ENCODE measurements at regions of chr18 and their contacts with region 1.

Region 1: DNA sequence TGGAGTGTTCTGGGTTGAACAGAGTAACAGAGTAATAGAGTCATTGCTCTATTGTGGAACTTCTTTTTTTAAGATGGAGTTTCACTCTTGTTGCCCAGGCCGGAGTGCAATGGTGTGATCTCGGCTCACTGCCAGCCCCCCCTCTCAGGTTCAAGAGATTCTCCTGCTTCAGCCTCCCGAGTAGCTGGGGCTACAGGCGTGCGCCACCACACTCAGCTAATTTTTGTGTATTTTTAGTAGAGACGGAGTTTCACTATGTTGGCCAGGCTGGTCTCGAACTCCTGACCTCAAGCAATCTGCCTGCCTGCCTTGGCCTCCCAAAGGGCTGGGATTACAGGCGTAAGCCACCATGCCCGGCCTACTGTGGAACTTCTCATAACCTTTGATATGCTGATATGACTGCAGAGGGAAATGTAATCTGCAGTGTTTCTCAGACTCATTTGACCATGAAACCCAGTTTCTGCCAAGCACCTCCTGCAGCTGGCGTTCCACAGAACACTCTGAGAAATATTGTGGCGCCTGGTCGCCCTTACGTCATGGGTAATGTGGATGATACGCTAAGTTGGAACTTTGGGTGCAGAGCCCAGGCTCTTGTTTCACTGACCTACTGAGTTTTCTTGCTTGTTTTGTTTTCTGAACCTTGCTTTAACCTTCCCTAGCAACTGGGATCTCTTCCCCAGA is 213.8 kb downstream of the BCL2 start:
- DNase-seq: no peak
- H3K4me3 Mint-ChIP-seq: no peak overlapping the region
- H3K27ac Mint-ChIP-seq: no peak overlapping the region
- H3K4me1 Mint-ChIP-seq: peaks cover 61% of the 10 kb centered on the region
- H3K27me3 Mint-ChIP-seq: peaks cover 5% of the 10 kb centered on the region

Region 2: DNA sequence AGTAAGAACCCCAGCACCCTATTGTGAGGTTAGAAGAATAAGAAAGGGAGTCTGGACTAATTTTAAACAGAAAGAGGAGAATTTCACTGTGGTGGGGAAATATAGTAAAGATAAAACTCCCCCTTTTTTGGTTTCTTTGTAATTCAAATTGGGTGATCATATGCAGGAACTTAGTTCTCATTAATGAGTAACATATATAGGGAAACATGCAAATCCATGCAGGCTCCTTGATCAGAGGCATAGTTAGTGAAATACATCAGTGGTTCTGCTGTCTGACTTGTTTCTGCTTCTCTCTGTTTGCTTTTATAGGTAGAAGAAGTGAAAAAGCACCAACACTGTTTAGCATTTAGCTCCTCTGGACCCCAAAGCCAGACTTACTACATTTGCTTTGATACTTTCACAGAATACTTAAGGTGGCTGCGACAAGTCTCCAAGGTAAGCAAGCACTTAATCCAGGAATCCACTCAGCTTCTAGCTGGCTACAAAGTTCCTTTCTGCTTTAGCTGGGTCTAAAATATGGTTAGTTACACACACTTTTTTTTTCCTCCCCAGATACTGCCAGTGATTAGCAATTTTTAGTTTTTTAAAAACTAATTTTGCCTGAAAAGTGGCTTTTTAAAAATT is 267.2 kb before region 1 on chr18:
- intact Hi-C with region 1: loop called (anchors 5 kb)
- DNase-seq: no peak
- H3K4me3 Mint-ChIP-seq: no peak overlapping the region
- H3K27ac Mint-ChIP-seq: no peak overlapping the region
- H3K4me1 Mint-ChIP-seq: peaks cover 51% of the 10 kb centered on the region
- H3K27me3 Mint-ChIP-seq: no peaks in the 10 kb centered on the region

Region 3: GRCh38 chr18:63074981-63075404 is 30.8 kb before region 1 on chr18:
- intact Hi-C with region 1: loop called (anchors 5 kb)
- DNase-seq: peak; percentile 56
- H3K4me3 Mint-ChIP-seq: peak overlapping the region; percentile 71
- H3K27ac Mint-ChIP-seq: no peak overlapping the region
- H3K4me1 Mint-ChIP-seq: peaks cover 13% of the 10 kb centered on the region
- H3K27me3 Mint-ChIP-seq: peaks cover 10% of the 10 kb centered on the region

Region 4: GRCh38 chr18:63119647-63120046 is 13.9 kb after region 1 on chr18:
- intact Hi-C with region 1: loop called (anchors 1 kb)
- DNase-seq: no peak
- H3K4me3 Mint-ChIP-seq: no peak overlapping the region
- H3K27ac Mint-ChIP-seq: no peak overlapping the region
- H3K4me1 Mint-ChIP-seq: peaks cover 2% of the 10 kb centered on the region
- H3K27me3 Mint-ChIP-seq: peaks cover 24% of the 10 kb centered on the region

Region 5: DNA sequence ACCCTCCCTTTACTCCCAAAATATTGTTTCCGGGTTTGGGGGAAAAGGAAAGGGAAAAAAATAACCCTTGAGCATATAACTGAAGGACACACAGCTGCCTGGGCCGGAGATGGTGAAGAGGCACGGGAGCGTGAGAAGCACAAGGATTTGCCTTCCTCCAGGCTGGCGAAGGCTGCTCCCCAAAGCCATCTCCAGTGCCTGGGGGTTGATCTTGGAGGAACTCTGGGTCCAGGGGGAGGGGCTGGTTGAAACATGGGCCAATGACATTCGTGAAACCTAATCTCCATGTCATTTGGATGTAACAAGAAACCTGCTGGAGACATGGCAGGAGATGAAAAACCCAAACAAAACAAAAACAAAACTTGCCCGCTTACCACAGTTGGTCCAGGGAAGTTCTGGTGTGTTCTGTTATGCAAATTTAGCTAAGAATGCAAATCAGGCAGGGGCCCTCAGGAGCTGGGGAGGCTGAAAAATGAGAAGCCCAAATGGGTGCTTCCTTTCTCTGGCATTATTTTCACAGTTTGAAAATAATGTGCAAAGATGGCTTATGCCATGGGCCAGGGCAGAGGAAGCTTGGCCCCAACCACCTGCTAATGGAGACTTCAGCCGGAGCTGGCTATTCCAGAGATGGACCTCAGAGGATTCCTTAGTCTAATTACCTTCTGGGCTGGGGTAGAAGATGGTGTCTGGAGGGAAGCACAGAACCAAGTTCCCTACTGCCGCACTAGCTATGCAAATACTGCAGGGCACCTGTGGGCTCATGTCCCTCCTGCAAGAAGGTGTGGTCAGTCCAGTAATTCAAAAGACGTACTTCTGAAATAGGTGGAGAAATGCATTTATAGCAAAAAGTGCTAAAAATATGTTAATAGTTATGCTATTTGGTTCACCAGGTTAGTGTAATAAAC is 32.9 kb after region 1 on chr18:
- intact Hi-C with region 1: loop called (anchors 2 kb)
- DNase-seq: no peak
- H3K4me3 Mint-ChIP-seq: peak overlapping the region; percentile 72
- H3K27ac Mint-ChIP-seq: peak overlapping the region; percentile 83
- H3K4me1 Mint-ChIP-seq: peaks cover 46% of the 10 kb centered on the region
- H3K27me3 Mint-ChIP-seq: no peaks in the 10 kb centered on the region

Region 6: DNA sequence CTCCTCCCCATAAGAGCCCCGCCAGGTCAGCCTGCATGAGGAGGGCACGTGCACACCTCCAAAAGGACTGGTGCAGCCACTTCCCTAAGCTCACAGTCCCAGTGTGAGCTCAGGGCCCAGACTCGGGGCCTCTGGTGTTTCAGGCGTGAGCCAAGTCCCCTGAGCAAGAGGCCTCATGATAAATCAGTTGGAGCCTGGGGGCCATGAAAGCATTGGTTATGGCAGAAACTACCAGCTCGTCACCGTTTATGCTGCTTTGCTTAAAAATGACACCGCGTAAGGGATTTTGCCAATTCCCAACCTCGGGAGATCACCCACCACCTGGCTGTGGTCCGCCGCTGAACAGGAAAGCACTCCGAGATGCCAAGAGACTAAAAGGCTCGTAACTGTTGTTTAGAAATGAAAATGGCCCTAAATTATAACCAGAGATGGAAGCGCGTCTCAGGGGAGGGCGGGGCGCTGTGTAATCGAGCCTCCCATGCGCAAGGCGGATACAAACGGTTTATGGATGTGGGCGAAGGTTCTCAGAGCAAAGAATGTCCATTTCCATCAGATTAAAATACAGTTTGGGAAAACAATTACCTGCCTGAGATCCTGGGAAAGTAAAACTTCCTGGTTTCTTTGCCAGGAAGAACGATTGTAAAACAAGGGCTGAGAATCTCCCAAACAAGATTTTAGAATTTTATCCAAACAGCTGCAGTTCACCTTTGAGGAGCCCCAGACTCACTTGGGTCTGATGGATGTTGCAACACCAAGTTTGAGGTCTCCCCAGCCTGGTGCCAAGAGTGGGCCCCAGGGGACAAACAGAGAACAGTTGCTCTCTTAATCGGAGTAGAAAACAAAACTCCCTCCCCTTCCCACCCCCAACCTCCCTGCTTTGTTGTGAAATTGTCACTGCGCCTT is 72.4 kb after region 1 on chr18:
- intact Hi-C with region 1: no loop called
- DNase-seq: no peak
- H3K4me3 Mint-ChIP-seq: no peak overlapping the region
- H3K27ac Mint-ChIP-seq: peak overlapping the region; percentile 44
- H3K4me1 Mint-ChIP-seq: peaks cover 41% of the 10 kb centered on the region
- H3K27me3 Mint-ChIP-seq: no peaks in the 10 kb centered on the region

Region 7: GRCh38 chr18:63216516-63217311 is 110.9 kb after region 1 on chr18:
- intact Hi-C with region 1: loop called (anchors 1 kb)
- DNase-seq: no peak
- H3K4me3 Mint-ChIP-seq: peak overlapping the region; percentile 57
- H3K27ac Mint-ChIP-seq: peak overlapping the region; percentile 91
- H3K4me1 Mint-ChIP-seq: peaks cover 88% of the 10 kb centered on the region
- H3K27me3 Mint-ChIP-seq: no peaks in the 10 kb centered on the region

Region 8: DNA sequence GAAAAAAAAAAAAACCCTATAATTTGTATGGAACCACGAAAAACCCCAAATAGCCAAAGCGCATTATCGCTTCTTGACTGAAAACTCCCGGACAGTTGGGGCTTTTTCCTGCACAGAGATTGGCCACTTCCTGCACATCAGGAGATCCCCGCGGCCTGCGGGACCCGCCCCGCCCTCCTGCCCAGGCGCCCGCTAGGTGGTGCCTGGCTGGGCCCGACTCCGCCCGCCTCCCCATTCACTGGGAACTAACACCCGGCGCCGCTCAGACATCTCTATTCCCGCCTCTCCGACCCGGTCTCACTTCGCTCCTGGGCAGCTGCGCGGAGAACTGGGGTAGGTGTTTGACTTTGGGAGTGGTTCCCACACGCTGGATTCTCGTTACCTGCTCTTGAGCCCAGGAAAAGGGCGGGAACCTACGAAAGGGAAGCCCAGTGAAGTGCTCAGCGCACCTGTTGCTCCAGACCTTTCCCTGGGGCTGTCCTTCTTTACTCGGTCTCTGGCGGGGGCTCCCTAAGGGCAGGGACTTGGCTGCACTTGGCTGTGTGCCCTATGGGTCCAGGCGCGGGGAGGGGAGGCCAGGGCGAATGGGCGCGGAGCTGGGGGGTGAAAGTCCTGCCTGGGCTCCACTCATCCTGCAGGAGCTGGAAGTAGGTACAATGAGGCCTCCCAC is 843.4 kb after region 1 on chr18 and contains the start of gene HMSD:
- intact Hi-C with region 1: loop called (anchors 2 kb)
- DNase-seq: peak; percentile 52
- H3K4me3 Mint-ChIP-seq: peak within 1 kb of the TSS; percentile 77
- H3K27ac Mint-ChIP-seq: peak within 1 kb of the TSS; percentile 67
- H3K4me1 Mint-ChIP-seq: peaks cover 38% of the 10 kb centered on the region
- H3K27me3 Mint-ChIP-seq: peaks cover 2% of the 10 kb centered on the region
- total RNA-seq, gene HMSD: 9.1 and 14.9 TPM in 2 replicates

Measured in activated T-helper 2 cell treated with anti-CD3 and anti-CD28 coated beads, Interferon-gamma antibody, Interleukin-2, Interleukin-4, amounts not matched to agents 10 μg/mL and 5 μg/mL and 100 μg/mL, durations not matched to agents 14 hours and 24 hours and 36 hours (primary cell).